GM12878 (cell line): ENCODE measurements at regions of chr19 and their contacts with region 1.

Region 1: GRCh38 chr19:2168619-2169424 is 5.1 kb downstream of the DOT1L start:
- DNase-seq: peak; percentile 92
- ATAC-seq: peak; percentile 70
- H3K4me3 ChIP-seq: peak overlapping the region; percentile 92; the same call in 1 of the 2 replicates
- H3K27ac ChIP-seq: peak overlapping the region; percentile 74
- H3K4me1 ChIP-seq: peaks cover 49% of the 10 kb centered on the region
- H3K27me3 ChIP-seq: no peaks in the 10 kb centered on the region
- CTCF ChIP-seq: 0 out of 6 replicates have a peak, but pooled peaks of 1 of the 3 experiments have one; percentile 14
- EP300 ChIP-seq: peak; percentile 52 to 75; a peak in 2 of 4 replicates
- POLR2A ChIP-seq: peak; percentile 59; the same call in 1 of the 2 replicates
- RAD21 ChIP-seq: no peak

Region 2: GRCh38 chr19:2186071-2186846 is 17.4 kb after region 1 on chr19:
- CTCF ChIA-PET with region 1: interaction called, 64 read pairs
- POLR2A ChIA-PET with region 1: interaction called, 53 read pairs
- RAD21 ChIA-PET with region 1: interaction called, 46 read pairs
- SMC1A ChIA-PET with region 1: interaction called, 41 read pairs
- in situ Hi-C with region 1: no loop called
- intact Hi-C with region 1: loop called (anchors 1 kb)
- DNase-seq: no peak
- ATAC-seq: no peak
- H3K4me3 ChIP-seq: no peak overlapping the region
- H3K27ac ChIP-seq: no peak overlapping the region
- H3K4me1 ChIP-seq: peaks cover 30% of the 10 kb centered on the region
- H3K27me3 ChIP-seq: no peaks in the 10 kb centered on the region
- CTCF ChIP-seq: no peak
- EP300 ChIP-seq: no peak
- POLR2A ChIP-seq: no peak
- RAD21 ChIP-seq: no peak

Region 3: GRCh38 chr19:2261438-2262172 is 92.8 kb after region 1 on chr19:
- CTCF ChIA-PET with region 1: interaction called, 10 read pairs
- POLR2A ChIA-PET with region 1: interaction called, 9 read pairs
- RAD21 ChIA-PET with region 1: interaction called, 3 read pairs
- SMC1A ChIA-PET with region 1: interaction called, 5 read pairs
- in situ Hi-C with region 1: no loop called
- intact Hi-C with region 1: loop called (anchors 5 kb)
- DNase-seq: no peak
- ATAC-seq: peak; percentile 17; the same call in 1 of the 3 replicates
- H3K4me3 ChIP-seq: no peak overlapping the region
- H3K27ac ChIP-seq: no peak overlapping the region
- H3K4me1 ChIP-seq: peaks cover 25% of the 10 kb centered on the region
- H3K27me3 ChIP-seq: no peaks in the 10 kb centered on the region
- CTCF ChIP-seq: peak; percentile 56 to 77 (median 76)
- EP300 ChIP-seq: no peak
- POLR2A ChIP-seq: no peak
- RAD21 ChIP-seq: peak; percentile 50

Region 4: GRCh38 chr19:2627319-2627829 is 458.6 kb after region 1 on chr19:
- CTCF ChIA-PET with region 1: no interaction called
- POLR2A ChIA-PET with region 1: interaction called, 5 read pairs
- RAD21 ChIA-PET with region 1: interaction called, 5 read pairs
- SMC1A ChIA-PET with region 1: no interaction called
- in situ Hi-C with region 1: no loop called
- intact Hi-C with region 1: loop called (anchors 10 kb)
- DNase-seq: no peak
- ATAC-seq: peak; percentile 52
- H3K4me3 ChIP-seq: no peak overlapping the region
- H3K27ac ChIP-seq: peak overlapping the region; percentile 45
- H3K4me1 ChIP-seq: peaks cover 55% of the 10 kb centered on the region
- H3K27me3 ChIP-seq: no peaks in the 10 kb centered on the region
- CTCF ChIP-seq: no peak
- EP300 ChIP-seq: no peak
- POLR2A ChIP-seq: peak; percentile 54; the same call in 1 of the 2 replicates
- RAD21 ChIP-seq: no peak